CD4-positive, alpha-beta memory T cell (primary cell): ENCODE measurements at regions of chr10 and their contacts with region 1.

Region 1: GRCh38 chr10:86139066-86139657 is 227.4 kb downstream of the GRID1 start:
- DNase-seq: peak in 2 of 5 donors; percentile 3 to 5
- H3K4me3 ChIP-seq: no peak overlapping the region
- H3K4me3 Mint-ChIP-seq: no peak overlapping the region
- H3K27ac ChIP-seq: no peak overlapping the region
- H3K27ac Mint-ChIP-seq: no peak overlapping the region
- H3K4me1 ChIP-seq: no peaks in the 10 kb centered on the region
- H3K4me1 Mint-ChIP-seq: no peaks in the 10 kb centered on the region
- H3K27me3 ChIP-seq: no peaks in the 10 kb centered on the region
- H3K27me3 Mint-ChIP-seq: peaks cover 0 to 3% of the 10 kb centered on the region in 2 donors

Region 2: DNA sequence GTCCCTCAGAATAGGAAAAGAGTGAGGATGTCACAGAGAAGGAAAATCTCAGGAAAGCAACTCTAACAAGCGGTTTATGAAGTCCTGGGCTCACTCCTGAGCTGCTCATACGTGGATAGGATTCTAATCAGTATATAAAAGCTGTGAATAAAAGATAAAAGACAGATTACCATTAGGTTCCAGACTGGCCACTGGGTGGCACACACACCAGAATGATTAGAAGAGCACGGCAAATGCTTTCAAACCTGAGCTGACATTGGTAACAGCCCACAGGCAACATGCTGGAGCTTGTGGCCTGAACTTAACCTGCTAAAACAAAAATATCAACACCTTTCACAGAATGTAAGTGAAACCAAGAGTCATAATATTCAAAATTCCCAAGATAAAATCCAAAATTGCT is 143.4 kb before region 1 on chr10:
- CTCF ChIA-PET with region 1: no interaction called
- POLR2A ChIA-PET with region 1: no interaction called
- intact Hi-C with region 1: loop called (anchors 5 kb)
- DNase-seq: peak in 1 of 5 donors; percentile 11
- H3K4me3 ChIP-seq: no peak overlapping the region
- H3K4me3 Mint-ChIP-seq: no peak overlapping the region
- H3K27ac ChIP-seq: no peak overlapping the region
- H3K27ac Mint-ChIP-seq: no peak overlapping the region
- H3K4me1 ChIP-seq: no peaks in the 10 kb centered on the region
- H3K4me1 Mint-ChIP-seq: no peaks in the 10 kb centered on the region
- H3K27me3 ChIP-seq: no peaks in the 10 kb centered on the region
- H3K27me3 Mint-ChIP-seq: peaks cover 1 to 4% of the 10 kb centered on the region in 2 donors

Region 3: DNA sequence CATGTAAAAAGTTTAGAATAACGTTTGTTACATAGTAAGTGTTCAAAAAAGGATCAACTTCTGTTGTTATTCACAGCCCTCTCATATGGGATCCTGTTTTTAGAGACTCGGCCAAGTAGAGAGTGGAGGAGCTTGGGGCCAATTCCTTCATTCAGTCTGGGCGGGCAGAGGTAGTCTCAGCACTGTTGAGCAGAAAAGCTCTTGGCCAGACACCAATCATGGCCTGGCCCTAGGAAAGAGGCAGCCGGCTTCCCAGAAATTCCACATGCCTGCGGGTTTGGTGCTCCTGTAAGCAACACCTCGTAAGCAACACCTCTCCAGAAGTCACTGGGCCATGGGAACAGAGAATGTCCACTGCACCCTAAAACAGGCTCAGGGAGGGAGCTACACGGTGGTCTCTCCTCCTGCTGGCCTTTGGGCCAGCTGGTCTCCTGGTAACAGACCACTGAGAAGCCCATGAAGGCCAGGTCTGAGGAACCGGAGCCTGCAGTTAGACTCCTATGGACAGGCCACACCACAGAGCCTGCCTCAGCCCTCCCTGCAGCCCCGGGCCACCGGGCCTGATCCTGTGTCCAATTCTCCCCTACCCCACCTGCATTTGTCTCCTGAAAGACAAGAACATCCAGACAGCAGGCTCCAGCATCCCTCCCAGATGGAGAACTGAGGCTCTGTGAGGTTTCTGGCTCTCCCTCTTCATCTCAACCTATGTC is 78.4 kb after region 1 on chr10:
- CTCF ChIA-PET with region 1: no interaction called
- POLR2A ChIA-PET with region 1: no interaction called
- intact Hi-C with region 1: no loop called
- DNase-seq: no peak
- H3K4me3 ChIP-seq: no peak overlapping the region
- H3K4me3 Mint-ChIP-seq: no peak overlapping the region
- H3K27ac ChIP-seq: no peak overlapping the region
- H3K27ac Mint-ChIP-seq: no peak overlapping the region
- H3K4me1 ChIP-seq: no peaks in the 10 kb centered on the region
- H3K4me1 Mint-ChIP-seq: no peaks in the 10 kb centered on the region
- H3K27me3 ChIP-seq: no peaks in the 10 kb centered on the region
- H3K27me3 Mint-ChIP-seq: peaks cover 2 to 7% of the 10 kb centered on the region in 2 donors